Ascending aorta (tissue), 2 donors: ENCODE measurements at regions of chr2 and their contacts with region 1.

Region 1: DNA sequence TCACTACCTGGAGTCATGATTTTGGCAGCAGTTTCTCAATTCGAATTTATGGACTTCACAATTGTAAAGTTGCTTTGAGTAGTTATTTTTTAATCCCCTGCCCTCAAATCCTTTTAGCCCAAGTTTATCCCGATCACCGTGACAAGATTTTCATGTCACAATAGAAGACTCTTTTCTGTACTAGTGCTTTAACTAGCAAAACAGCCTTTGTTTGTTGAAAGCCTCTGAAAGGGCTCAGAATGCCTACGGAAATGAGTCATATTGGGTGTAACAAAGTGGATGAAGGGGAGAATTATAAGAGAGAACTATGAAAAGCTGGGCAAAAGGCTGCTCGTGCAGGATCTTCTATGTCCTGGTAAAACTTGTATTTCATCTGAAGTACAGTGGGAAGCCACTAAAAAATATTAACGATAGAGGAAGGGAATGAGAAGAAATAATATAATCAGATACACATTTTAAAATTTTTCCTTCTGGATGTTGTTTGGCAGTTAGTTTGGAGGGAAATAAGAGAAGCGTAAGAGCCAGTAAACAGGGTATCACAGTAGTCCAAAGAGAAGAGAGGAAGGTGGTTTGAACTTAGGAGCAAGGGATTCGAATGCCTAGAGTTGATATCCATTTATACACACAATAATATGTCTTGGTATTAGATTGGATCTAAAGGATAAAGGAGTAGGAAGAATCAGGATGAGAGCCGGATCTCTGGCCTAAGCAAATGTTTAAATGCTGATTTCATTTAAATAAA is 114.9 kb downstream of the GALNT13 start:
- DNase-seq: no peak
- H3K4me3 ChIP-seq: no peak overlapping the region
- H3K27ac ChIP-seq: no peak overlapping the region
- H3K4me1 ChIP-seq: no peaks in the 10 kb centered on the region
- H3K27me3 ChIP-seq: no peaks in the 10 kb centered on the region
- CTCF ChIP-seq: no peak

Region 2: DNA sequence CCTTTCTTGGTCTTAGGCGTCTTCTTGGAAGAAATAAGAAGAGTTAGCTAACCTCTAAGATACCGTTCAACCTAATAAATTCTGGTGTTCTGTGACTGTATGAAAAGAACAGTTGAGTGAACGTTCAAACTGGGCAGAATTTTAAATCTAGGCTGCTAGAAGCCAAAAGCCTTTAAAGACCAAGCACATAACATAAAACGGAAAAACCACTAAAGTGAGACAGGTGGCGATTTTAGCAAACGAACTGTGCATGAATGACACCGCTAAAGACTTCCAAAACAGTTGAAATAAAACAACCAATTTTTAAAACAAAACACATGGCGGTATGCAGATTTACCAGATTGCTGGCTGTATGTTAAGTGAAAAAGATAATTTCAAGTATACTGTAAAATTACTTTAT is 41.9 kb before region 1 on chr2:
- intact Hi-C with region 1: no loop called
- DNase-seq: no peak
- H3K4me3 ChIP-seq: no peak overlapping the region
- H3K27ac ChIP-seq: no peak overlapping the region
- H3K4me1 ChIP-seq: no peaks in the 10 kb centered on the region
- H3K27me3 ChIP-seq: no peaks in the 10 kb centered on the region
- CTCF ChIP-seq: no peak

Region 3: DNA sequence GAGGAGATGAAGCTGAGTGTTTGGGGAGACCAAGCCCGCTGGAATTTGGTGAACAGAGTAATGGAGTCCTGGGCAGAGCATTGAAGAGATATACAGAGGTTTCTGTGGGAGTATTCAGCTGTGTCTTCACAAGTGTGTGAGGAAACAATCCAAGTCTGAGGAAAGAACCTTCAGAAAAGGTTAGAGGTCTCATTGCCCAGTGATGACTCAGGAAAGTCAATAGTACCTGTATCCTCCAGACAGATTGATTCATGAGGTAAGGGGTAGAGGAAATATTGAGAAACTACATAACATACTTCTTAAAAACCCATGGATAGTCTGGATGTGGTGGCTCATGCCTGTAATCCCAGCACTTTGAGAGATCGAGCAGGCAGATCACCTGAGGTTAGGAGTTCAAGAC is 277.4 kb after region 1 on chr2:
- intact Hi-C with region 1: loop called (anchors 10 kb)
- DNase-seq: no peak
- H3K4me3 ChIP-seq: no peak overlapping the region
- H3K27ac ChIP-seq: no peak overlapping the region
- H3K4me1 ChIP-seq: no peaks in the 10 kb centered on the region
- H3K27me3 ChIP-seq: no peaks in the 10 kb centered on the region
- CTCF ChIP-seq: no peak